H1 (cell line): ENCODE measurements at regions of chr1 and their contacts with region 1.

Region 1: DNA sequence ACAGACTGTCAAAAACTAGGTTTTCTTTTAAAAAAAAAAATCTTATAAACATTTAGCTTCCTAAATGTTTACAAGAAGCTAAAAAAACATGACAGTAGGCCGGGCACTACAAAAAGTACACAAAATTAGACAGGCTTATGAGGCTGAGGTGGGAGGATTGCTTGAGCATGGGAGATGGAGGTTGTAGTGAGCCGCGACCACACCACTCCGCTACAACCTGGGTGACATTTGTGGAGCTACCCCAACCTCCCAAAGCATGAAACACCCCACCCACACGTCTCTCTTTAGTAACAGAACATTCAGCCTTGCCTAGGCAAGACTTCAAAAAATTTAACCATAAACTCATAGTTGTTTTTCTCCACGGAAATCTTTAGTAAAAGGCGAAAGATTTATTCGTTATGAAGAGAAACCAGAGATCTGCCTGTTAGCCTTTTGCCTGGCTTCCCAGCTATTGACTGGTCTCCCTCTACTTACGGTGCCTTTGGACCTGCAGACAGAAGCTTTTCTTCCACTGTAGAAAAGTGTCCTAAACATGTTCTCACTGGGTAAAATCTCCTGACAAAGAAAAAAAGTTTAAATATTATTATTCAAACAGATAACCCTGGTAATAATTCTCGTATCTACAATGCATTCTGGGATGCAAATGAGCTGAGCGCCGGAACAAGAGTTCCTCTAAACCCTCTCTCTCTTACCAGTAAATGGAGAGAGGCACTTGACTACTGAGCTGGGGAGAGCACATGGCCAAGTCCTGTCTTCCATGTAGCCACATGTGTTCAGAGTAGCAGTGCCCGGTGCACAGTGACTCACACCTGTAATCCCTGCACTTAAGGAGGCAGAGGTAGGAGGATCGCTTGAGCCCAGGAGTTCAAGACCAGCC is 9.2 kb downstream of the RNU5D-1 start:
- DNase-seq: no peak
- H3K4me3 ChIP-seq: no peak overlapping the region
- H3K27ac ChIP-seq: peak overlapping the region; percentile 62
- H3K4me1 ChIP-seq: peaks cover 0 to 1% (median 0%) of the 10 kb centered on the region in 4 experiments; a peak in 3 of 7 replicates
- H3K27me3 ChIP-seq: no peaks in the 10 kb centered on the region
- CTCF ChIP-seq: no peak
- EP300 ChIP-seq: no peak
- POLR2A ChIP-seq: peak; percentile 100
- RAD21 ChIP-seq: no peak

Region 2: DNA sequence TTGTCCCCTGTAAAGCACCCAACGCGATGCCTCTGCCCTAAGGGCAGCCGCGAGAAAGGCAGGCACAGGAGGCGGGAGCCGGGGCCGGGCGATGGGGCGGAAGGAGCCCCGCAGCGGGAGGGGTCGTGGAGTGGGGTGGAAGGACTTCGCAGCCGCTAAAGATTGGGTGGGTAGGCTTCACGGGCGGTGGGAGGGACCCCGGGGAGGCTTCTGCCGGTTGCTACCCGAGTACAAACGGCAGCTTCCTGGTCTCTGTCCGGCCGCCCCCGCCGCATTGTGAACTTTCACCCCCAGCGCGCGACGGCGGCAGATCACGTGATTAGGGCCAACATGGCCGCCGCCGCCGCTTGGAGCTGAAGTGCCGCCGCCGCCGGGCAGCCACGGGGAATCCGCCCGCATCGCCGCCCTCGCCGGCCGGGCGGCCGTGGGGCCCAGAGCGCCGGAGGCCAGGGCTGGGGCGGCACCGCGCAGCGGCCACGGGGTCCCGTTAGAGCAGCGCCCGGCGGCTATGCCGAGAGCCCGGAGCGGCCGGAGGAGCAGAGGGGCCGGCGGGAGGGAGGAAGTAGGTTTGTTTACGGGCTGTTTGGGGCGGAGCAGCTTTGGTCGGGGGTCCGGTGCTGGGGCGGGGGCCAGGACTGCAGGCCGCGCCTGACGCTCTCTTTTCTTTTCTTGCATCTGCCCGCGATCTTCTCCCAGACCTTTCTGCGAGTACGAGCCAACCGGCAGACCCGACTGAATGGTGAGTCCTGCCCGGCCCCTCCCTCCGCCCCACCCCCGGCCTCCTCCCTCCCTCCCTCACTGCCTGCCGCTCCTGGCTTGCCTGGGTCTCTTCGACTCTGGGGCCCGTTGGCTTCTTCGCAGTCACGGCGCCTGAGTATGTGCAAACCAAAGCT is 89.8 kb before region 1 on chr1:
- CTCF ChIA-PET with region 1: no interaction called
- POLR2A ChIA-PET with region 1: interaction called, 16 read pairs
- DNase-seq: peak in 1 of 2 experiments; percentile 91
- H3K4me3 ChIP-seq: peak overlapping the region; percentile 73 to 81 (median 78)
- H3K27ac ChIP-seq: peak overlapping the region; percentile 96
- H3K4me1 ChIP-seq: peaks cover 0 to 11% (median 4%) of the 10 kb centered on the region in 4 experiments; a peak in 6 of 7 replicates
- H3K27me3 ChIP-seq: no peaks in the 10 kb centered on the region
- CTCF ChIP-seq: no peak
- EP300 ChIP-seq: peak in 1 of 2 experiments; percentile 36; a peak in 1 of 3 replicates
- POLR2A ChIP-seq: peak; percentile 61 to 97
- RAD21 ChIP-seq: no peak

Region 3: GRCh38 chr1:44684525-44684924 is 37.2 kb before region 1 on chr1:
- CTCF ChIA-PET with region 1: interaction called, 3 read pairs
- POLR2A ChIA-PET with region 1: interaction called, 11 read pairs
- DNase-seq: no peak
- H3K4me3 ChIP-seq: no peak overlapping the region
- H3K27ac ChIP-seq: no peak overlapping the region
- H3K4me1 ChIP-seq: peaks cover 1 to 17% (median 10%) of the 10 kb centered on the region in 4 experiments; a peak in 5 of 7 replicates
- H3K27me3 ChIP-seq: no peaks in the 10 kb centered on the region
- CTCF ChIP-seq: no peak
- EP300 ChIP-seq: no peak
- POLR2A ChIP-seq: no peak
- RAD21 ChIP-seq: no peak

Region 4: DNA sequence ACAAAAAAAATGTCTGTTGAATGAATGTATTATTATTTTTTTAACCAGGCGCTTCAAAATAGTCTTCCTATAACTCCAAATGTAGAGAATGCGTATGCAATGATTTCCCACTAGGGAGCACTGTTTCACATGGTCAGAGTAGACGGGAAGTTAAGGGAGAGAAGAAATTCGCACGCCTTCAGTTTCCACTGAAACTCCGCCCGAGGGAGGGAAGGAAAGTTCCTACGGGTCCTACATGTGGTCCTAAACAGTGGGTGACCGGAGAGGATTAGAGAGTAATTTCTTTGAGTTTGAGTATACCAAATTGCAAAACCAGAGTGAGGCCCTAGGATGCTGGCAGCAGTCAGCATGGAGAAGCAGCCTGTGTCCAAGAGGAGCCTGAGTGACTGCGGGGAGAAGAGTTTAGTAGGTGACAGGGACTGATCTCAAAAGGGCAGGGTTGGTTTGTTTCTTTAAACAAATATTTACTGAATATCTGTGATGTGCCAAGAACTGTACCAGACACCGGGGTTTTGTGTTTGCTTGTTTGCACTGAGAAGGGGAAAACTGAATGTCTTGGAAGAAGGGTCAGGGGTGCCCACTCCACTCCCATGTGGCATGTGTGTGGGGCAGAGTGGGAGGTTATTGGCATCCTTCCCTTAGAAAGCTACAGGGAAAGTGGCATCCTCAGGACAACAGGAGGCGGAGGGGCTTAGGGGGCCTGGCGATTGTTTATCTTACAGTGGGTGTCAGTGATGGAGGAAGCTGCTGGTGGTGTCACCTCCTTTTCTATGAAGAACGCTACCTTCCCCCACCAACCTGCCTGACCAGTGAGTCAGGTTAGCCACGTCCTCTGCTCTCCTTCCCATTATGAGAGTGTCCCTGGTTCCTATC is 13.5 kb before region 1 on chr1:
- CTCF ChIA-PET with region 1: interaction called, 107 read pairs
- POLR2A ChIA-PET with region 1: interaction called, 32 read pairs
- DNase-seq: no peak
- H3K4me3 ChIP-seq: no peak overlapping the region
- H3K27ac ChIP-seq: no peak overlapping the region
- H3K4me1 ChIP-seq: peaks cover 0 to 5% (median 1%) of the 10 kb centered on the region in 4 experiments; a peak in 3 of 7 replicates
- H3K27me3 ChIP-seq: peaks cover 0 to 4% (median 0%) of the 10 kb centered on the region in 4 experiments; a peak in 1 of 7 replicates
- CTCF ChIP-seq: peak in 2 of 3 experiments; percentile 47 to 58; a peak in 2 of 4 replicates
- EP300 ChIP-seq: no peak
- POLR2A ChIP-seq: no peak
- RAD21 ChIP-seq: peak; percentile 48 to 53; a peak in 3 of 4 replicates

Region 5: DNA sequence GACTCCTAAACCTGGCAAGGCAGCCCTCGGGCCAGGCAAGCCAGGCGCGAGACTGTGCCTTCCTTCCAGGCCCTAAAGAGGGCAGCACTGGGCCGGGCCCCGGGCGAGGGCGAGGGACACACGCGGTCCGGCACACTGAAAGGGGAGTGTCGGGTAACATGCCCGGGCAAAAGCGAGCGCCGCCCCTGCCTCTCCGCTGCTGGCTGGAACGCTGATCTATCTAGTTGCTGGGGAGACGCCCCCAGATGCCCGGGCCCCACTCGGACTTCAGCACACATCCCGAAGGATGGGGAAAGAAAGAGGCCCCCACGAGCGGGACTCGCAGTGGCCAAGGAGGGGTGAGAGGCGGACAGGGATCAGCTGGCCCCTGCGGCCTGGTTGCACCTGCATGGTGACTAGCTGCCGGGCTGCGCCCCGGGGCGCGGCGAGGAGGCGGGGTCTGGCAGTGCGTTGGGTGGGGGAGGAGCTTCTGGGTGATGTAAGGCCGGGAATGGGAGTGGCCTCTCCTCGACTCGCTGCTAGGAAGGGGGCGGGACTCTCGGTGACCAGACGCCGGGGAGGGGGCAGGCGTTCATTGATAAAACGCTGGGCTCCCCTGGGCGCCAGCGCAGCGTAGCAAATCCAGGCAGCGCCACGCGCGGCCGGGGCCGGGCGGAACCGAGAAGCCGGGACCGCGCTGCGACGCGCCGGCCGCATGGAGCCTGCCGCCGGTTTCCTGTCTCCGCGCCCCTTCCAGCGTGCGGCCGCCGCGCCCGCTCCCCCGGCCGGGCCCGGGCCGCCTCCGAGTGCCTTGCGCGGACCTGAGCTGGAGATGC is 78.3 kb after region 1 on chr1 and contains the start of gene PLK3:
- CTCF ChIA-PET with region 1: no interaction called
- POLR2A ChIA-PET with region 1: interaction called, 11 read pairs
- DNase-seq: peak; percentile 93 to 98
- H3K4me3 ChIP-seq: peak within 1 kb of the TSS; percentile 60 to 76 (median 66)
- H3K27ac ChIP-seq: peak within 1 kb of the TSS; percentile 91
- H3K4me1 ChIP-seq: peaks cover 0 to 5% (median 2%) of the 10 kb centered on the region in 4 experiments; a peak in 3 of 7 replicates
- H3K27me3 ChIP-seq: peaks cover 0 to 5% (median 0%) of the 10 kb centered on the region in 4 experiments; a peak in 2 of 7 replicates
- CTCF ChIP-seq: peak in 2 of 3 experiments; percentile 89 to 97; a peak in 3 of 4 replicates
- EP300 ChIP-seq: no peak
- POLR2A ChIP-seq: peak in 1 of 2 experiments; percentile 98; a peak in 2 of 3 replicates
- RAD21 ChIP-seq: peak; percentile 71 to 79
- total RNA-seq, gene PLK3: 7.9 and 9.7 TPM in 2 replicates

Region 6: GRCh38 chr1:44812822-44813543 is 91.3 kb after region 1 on chr1:
- CTCF ChIA-PET with region 1: interaction called, 3 read pairs
- POLR2A ChIA-PET with region 1: interaction called, 122 read pairs
- DNase-seq: peak in 1 of 2 experiments; percentile 78
- H3K4me3 ChIP-seq: peak overlapping the region; percentile 32 to 73 (median 64)
- H3K27ac ChIP-seq: no peak overlapping the region
- H3K4me1 ChIP-seq: peaks cover 8 to 26% (median 18%) of the 10 kb centered on the region in 4 experiments
- H3K27me3 ChIP-seq: peaks cover 0 to 8% (median 1%) of the 10 kb centered on the region in 4 experiments; a peak in 4 of 7 replicates
- CTCF ChIP-seq: no peak
- EP300 ChIP-seq: no peak
- POLR2A ChIP-seq: no peak
- RAD21 ChIP-seq: no peak

Region 7: DNA sequence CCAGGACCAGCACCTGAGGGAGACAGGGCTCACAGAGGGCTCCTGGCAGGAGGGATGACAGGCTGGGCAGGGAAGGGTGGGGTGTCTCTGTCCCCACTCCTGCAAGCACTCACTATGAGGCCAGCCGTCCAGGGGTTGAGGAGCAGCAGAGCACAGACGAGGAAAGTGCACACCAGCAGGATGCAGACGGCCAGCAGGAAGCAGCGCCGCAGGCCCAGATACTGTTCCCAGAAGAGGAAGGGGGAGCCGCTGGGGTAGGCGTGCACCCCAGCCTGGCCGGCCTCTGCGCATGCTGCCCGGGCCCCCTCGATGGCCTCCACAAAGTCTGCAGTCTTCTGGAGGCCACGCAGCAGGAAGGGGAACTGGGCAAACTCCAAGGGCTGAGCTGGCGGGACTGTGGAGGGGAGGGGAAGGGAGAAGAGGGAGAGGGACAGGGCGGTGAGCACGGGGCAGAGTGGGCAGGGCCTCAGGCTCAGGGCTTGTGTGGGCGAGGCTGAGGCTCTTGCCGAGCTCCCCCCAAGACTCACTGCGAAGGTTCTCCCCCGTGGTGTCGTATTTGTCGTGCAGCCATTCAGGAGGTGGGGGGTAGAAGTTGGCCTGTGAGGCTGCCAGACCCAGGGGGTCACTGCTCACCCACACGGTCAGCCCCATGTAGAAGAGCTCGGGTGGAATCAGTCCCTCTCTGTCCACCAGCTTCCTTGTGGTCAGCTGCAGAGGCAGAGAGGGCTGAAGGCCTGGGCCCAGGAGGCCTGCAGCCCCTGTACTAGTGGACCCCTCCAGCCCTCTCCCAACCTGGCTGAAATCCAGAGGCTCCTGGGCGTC is 104.9 kb after region 1 on chr1:
- CTCF ChIA-PET with region 1: interaction called, 4 read pairs
- POLR2A ChIA-PET with region 1: interaction called, 122 read pairs
- DNase-seq: no peak
- H3K4me3 ChIP-seq: no peak overlapping the region
- H3K27ac ChIP-seq: no peak overlapping the region
- H3K4me1 ChIP-seq: peaks cover 0 to 9% (median 2%) of the 10 kb centered on the region in 4 experiments; a peak in 6 of 7 replicates
- H3K27me3 ChIP-seq: no peaks in the 10 kb centered on the region
- CTCF ChIP-seq: no peak
- EP300 ChIP-seq: no peak
- POLR2A ChIP-seq: no peak
- RAD21 ChIP-seq: no peak